Heart right ventricle (tissue), 16 donors: ENCODE measurements at regions of chr7 and their contacts with region 1.

Region 1: DNA sequence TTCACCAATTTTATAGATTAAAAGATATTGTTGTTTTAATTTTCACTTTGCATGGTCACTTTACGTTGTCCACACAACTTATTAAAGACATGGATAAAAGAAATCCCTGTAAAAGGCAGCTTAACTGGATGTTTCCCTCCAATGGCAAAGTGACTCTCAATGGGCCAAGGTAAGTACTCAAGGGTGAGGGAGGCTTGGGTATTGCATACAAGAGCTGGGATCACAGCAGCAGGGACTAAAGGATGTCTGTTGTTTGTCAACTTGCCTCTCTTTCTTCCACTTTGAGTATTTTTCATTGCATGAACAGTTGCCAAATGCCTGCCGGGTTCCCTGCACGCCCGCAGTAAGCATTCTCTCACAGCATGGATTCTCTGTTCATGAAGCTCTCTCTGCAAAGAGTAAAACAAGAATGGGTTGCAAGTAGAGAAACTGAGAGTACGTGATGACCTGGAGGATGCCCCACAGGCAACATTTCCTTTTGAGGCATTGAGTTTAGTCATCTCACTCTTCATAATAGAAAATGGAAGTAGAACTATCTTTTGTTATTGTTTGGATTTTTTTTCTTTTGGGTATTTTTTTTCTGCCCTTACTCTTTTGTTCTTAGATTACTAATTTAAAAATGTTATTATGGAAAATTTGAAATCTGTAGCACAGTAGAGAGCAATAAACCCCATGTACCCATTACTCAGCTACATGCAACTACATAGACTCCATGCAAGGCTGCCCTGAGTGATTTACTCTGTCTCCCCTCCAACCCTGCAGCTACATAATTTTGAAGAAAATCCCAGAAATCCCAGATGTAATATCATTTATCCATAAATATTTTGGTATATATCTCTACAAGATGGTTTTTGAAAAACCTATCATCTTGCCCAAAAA is 26.3 kb downstream of the GPR141 start:
- DNase-seq: no peak
- ATAC-seq: no peak
- H3K4me3 ChIP-seq: no peak overlapping the region
- H3K27ac ChIP-seq: no peak overlapping the region
- H3K4me1 ChIP-seq: peaks cover 0 to 24% (median 9%) of the 10 kb centered on the region in 9 donors
- H3K27me3 ChIP-seq: no peaks in the 10 kb centered on the region
- CTCF ChIP-seq: no peak

Region 2: DNA sequence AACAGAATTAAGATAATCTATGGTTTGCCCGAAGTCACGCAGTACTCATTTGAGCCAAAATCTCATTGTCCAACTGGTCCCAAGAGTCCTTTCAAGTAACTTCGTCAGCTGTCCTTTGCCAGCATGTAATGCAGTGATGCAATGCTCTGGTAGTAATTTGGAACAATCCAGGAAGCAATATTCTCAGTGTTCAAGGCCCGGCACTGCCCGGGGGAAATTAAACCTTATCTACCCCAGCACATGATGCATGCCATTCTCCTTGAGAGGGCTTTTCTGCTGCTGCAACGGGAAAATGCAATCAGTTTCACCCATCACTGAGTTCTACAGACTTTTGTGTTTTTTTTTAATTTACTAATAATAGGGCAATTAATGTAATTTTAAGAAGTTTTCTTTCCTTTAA is 61.0 kb after region 1 on chr7:
- intact Hi-C with region 1: loop called in 1 of 10 experiments (anchors 10 kb)
- DNase-seq: no peak
- ATAC-seq: no peak
- H3K4me3 ChIP-seq: no peak overlapping the region
- H3K27ac ChIP-seq: no peak overlapping the region
- H3K4me1 ChIP-seq: peaks cover 0 to 15% (median 0%) of the 10 kb centered on the region in 9 donors
- H3K27me3 ChIP-seq: no peaks in the 10 kb centered on the region
- CTCF ChIP-seq: no peak

Region 3: GRCh38 chr7:37833107-37833817 is 123.4 kb after region 1 on chr7:
- intact Hi-C with region 1: loop called in 1 of 10 experiments (anchors 10 kb)
- DNase-seq: peak; percentile 17 to 19
- ATAC-seq: peak in 3 of 8 donors; percentile 33 to 61 (median 40)
- H3K4me3 ChIP-seq: peak overlapping the region in 7 of 10 donors; percentile 7 to 48 (median 40)
- H3K27ac ChIP-seq: no peak overlapping the region
- H3K4me1 ChIP-seq: peaks cover 0 to 18% (median 5%) of the 10 kb centered on the region in 9 donors
- H3K27me3 ChIP-seq: peaks cover 0 to 7% (median 0%) of the 10 kb centered on the region in 7 donors
- CTCF ChIP-seq: peak; percentile 66 to 86 (median 76)

Region 4: DNA sequence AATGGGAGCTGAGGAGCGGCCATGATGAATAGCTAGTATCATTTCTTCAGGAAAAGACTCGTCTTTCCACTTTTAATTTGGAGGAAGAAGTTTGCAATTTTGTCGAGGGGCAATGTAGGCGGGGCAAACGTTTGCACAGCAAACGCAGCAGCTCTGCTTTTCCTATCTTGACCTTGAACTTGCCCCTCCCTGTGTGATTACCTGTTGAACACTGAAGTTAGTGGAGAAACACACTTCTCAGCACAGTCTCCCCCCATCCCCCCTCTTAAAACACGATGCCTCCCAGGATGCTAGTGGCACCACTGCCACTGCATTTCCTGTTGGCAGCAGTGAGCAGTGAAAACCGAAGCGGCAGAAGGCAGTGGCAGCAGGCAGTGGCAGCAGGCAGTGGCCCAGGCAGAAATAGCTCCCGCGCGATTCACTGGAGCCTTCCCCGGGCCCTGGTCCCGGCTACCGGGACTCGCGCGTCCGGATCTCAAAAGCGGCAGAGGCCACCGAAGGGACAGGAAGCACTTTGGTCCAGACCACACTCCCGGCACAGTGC is 210.5 kb after region 1 on chr7 and contains the start of gene EPDR1:
- intact Hi-C with region 1: no loop called
- DNase-seq: peak in 1 of 2 donors; percentile 58
- ATAC-seq: peak in 7 of 8 donors; percentile 47 to 87 (median 70)
- H3K4me3 ChIP-seq: peak within 1 kb of the TSS; percentile 49 to 87 (median 77)
- H3K27ac ChIP-seq: peak within 1 kb of the TSS; percentile 75 to 92 (median 89)
- H3K4me1 ChIP-seq: peaks cover 4 to 52% (median 32%) of the 10 kb centered on the region in 9 donors
- H3K27me3 ChIP-seq: peaks cover 0 to 69% (median 17%) of the 10 kb centered on the region in 7 donors
- CTCF ChIP-seq: peak in 5 of 9 donors; percentile 5 to 37 (median 28)
- total RNA-seq, gene EPDR1: 33.9 to 75.0 (median 59.3) TPM

Region 5: DNA sequence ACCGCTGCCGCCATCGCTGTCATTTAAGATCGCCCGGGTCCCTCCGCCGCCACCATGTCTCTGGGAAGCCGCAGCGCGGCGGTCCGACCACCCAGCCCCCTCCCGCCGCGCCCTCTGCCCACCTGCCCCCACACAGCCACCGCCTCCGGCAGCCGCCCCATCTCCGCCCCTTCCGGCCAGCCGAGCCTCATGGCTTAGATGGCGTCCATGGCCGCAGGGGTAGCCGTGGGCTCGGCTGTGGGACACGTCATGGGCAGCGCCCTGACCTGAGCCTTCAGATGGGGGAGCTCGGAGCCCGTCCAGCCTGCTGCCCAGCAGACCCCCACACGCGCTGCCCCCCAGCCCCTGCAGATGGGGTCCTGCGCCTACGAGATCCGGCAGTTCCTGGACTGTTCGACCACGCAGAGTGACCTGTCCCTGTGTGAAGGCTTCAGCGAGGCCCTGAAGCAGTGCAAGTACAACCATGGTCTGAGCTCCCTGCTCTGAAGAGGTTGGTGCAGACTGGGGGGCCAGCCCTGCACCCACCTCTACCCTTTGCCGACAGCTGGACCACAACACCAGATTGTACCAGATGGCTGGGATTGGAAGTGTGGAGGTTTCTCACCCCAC is 601.6 kb after region 1 on chr7:
- intact Hi-C with region 1: no loop called
- DNase-seq: peak in 1 of 2 donors; percentile 59
- ATAC-seq: peak; percentile 61 to 86 (median 74)
- H3K4me3 ChIP-seq: peak overlapping the region; percentile 20 to 63 (median 54)
- H3K27ac ChIP-seq: peak overlapping the region in 4 of 10 donors; percentile 1 to 84 (median 74)
- H3K4me1 ChIP-seq: peaks cover 0 to 50% (median 25%) of the 10 kb centered on the region in 9 donors
- H3K27me3 ChIP-seq: peaks cover 0 to 4% (median 0%) of the 10 kb centered on the region in 7 donors
- CTCF ChIP-seq: no peak